ENCODE measurements at regions of chr4 and their contacts with region 1.

Region 1: DNA sequence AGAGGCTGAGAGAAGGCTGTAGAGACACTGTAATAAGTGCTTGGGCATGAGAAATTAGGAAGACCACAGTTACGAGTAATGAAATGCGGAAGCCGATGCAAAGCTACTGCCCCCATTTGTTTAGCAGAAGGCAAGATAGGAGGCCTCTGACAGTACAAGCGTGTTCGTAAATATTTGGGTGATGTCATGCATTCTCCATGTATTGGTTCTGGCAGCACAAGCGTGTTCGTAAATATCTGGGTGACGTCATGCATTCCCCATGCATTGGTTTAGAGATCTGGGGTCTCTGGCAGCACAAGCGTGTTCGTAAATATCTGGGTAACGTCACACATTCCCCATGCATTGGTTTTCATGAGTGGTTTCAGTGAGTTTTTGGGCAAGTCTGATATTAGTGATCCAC is 661.5 kb upstream of the FRG1 start:
- DNase-seq: no peak
- ATAC-seq: no peak
- H3K4me3 ChIP-seq: no peak overlapping the region
- H3K27ac ChIP-seq: no peak overlapping the region
- H3K4me1 ChIP-seq: no peaks in the 10 kb centered on the region
- H3K27me3 ChIP-seq: no peaks in the 10 kb centered on the region
- CTCF ChIP-seq: no peak

Region 2: DNA sequence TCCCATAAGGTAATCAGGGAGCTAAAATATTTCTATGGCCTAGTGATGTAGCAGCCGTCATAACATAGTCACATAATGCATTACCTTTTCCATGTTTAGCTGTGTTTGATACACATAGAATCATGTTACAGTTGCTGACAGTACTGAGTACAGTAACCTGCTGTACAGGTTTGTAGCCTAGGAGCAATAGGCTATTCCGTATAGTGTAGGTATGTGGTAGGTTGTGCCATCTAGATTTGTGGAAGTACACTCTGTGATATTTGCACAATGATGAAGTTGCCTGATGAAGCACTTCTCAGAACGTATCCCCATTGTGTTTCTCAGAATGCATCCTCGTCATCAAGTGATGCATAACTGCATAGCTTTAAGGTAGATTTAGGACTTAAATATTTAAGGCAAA is 1779.2 kb before region 1 on chr4:
- intact Hi-C with region 1: loop called in 1 of 10 experiments (anchors 5 kb)
- DNase-seq: no peak
- ATAC-seq: no peak
- H3K4me3 ChIP-seq: no peak overlapping the region
- H3K27ac ChIP-seq: no peak overlapping the region
- H3K4me1 ChIP-seq: no peaks in the 10 kb centered on the region
- H3K27me3 ChIP-seq: peaks cover 0 to 4% (median 0%) of the 10 kb centered on the region in 7 donors
- CTCF ChIP-seq: no peak

Region 3: GRCh38 chr4:189162073-189162789 is 117.0 kb before region 1 on chr4:
- intact Hi-C with region 1: no loop called
- DNase-seq: no peak
- ATAC-seq: no peak
- H3K4me3 ChIP-seq: no peak overlapping the region
- H3K27ac ChIP-seq: no peak overlapping the region
- H3K4me1 ChIP-seq: no peaks in the 10 kb centered on the region
- H3K27me3 ChIP-seq: peaks cover 0 to 9% (median 6%) of the 10 kb centered on the region in 7 donors
- CTCF ChIP-seq: no peak

Region 4: DNA sequence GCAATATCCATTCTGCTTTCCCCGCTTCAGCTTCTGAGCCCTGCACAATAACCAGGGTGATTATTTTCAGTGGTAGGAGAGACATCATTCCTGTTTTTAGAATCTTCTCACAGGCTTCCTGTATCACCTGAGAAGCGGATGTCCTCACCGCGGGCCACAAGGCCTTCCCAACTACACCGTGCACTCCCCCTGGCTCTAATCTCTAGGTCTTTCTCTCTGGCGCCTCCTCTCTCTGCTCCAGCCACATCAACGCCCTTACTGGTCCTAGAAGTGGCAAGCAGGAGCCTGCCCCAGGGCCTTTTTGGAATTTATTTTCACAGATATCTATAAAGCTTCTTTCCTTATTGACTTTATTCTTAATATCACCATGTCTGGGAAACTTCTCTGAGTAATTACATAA is 13.7 kb before region 1 on chr4:
- intact Hi-C with region 1: loop called in 1 of 10 experiments (anchors 1 kb)
- DNase-seq: no peak
- ATAC-seq: no peak
- H3K4me3 ChIP-seq: no peak overlapping the region
- H3K27ac ChIP-seq: no peak overlapping the region
- H3K4me1 ChIP-seq: no peaks in the 10 kb centered on the region
- H3K27me3 ChIP-seq: no peaks in the 10 kb centered on the region
- CTCF ChIP-seq: no peak

Region 5: DNA sequence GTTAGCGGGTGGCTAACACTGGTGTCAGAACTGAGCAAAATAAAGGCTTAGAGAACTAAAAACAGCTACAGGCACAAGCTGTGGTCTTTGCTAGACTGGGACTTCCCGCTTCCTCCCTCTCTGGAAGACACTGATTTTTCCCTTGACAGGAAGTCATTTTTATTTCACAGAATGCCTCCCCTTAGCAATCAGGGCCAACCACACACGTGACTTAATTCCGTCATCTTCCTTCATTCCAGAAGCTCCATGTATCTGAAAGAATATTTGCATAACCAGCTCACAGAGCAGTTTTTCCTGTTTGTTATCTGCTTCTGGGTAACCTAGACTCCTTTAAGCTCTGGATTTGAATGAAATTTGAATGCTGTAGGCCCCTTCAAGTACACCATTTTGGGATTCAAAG is 334.0 kb after region 1 on chr4:
- intact Hi-C with region 1: no loop called
- DNase-seq: no peak
- ATAC-seq: peak in 2 of 8 donors; percentile 18 to 22
- H3K4me3 ChIP-seq: no peak overlapping the region
- H3K27ac ChIP-seq: no peak overlapping the region
- H3K4me1 ChIP-seq: no peaks in the 10 kb centered on the region
- H3K27me3 ChIP-seq: no peaks in the 10 kb centered on the region
- CTCF ChIP-seq: no peak